Activated CD4-positive, alpha-beta memory T cell treated with anti-CD3 and anti-CD28 coated beads, Interleukin-2, amount 10 ng/mL, durations not matched to agents 7 days and 5 days (primary cell): ENCODE measurements at regions of chr12 and their contacts with region 1.

Region 1: GRCh38 chr12:75526655-75527511 is 15.5 kb upstream of the KRR1 start:
- DNase-seq: peak; percentile 30
- H3K4me3 Mint-ChIP-seq: no peak overlapping the region
- H3K27ac Mint-ChIP-seq: no peak overlapping the region
- H3K4me1 Mint-ChIP-seq: peaks cover 8% of the 10 kb centered on the region
- H3K27me3 Mint-ChIP-seq: peaks cover 22% of the 10 kb centered on the region

Region 2: DNA sequence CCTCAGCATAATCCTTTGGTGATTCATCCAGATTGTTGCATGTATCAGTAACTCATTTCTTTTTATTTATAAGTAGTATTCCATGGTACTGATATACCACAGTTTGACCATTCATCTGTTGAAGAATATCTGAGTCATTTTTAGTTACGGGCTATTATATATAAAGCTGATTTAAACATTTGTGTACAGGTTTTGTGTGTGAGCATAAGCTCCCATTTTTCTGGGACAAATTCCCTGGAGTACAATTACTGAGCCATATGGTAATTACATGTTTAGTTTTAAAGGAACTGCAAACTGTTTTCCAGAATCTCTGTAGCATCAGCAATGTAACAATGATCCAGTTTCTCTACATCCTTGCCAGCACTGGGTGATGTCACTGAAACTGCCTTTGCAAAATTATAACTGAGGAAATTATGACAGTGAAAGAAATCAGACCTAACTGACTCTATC is 220.7 kb after region 1 on chr12:
- CTCF ChIA-PET with region 1: no interaction called
- POLR2A ChIA-PET with region 1: no interaction called
- DNase-seq: no peak
- H3K4me3 Mint-ChIP-seq: no peak overlapping the region
- H3K27ac Mint-ChIP-seq: no peak overlapping the region
- H3K4me1 Mint-ChIP-seq: no peaks in the 10 kb centered on the region
- H3K27me3 Mint-ChIP-seq: peaks cover 24% of the 10 kb centered on the region

Region 3: GRCh38 chr12:75784591-75784990 is 257.7 kb after region 1 on chr12:
- CTCF ChIA-PET with region 1: no interaction called
- POLR2A ChIA-PET with region 1: no interaction called
- DNase-seq: no peak
- H3K4me3 Mint-ChIP-seq: no peak overlapping the region
- H3K27ac Mint-ChIP-seq: no peak overlapping the region
- H3K4me1 Mint-ChIP-seq: peaks cover 11% of the 10 kb centered on the region
- H3K27me3 Mint-ChIP-seq: peaks cover 1% of the 10 kb centered on the region

Region 4: GRCh38 chr12:75814851-75815754 is 288.2 kb after region 1 on chr12:
- CTCF ChIA-PET with region 1: interaction called, 13 read pairs
- POLR2A ChIA-PET with region 1: no interaction called
- DNase-seq: no peak
- H3K4me3 Mint-ChIP-seq: no peak overlapping the region
- H3K27ac Mint-ChIP-seq: no peak overlapping the region
- H3K4me1 Mint-ChIP-seq: peaks cover 24% of the 10 kb centered on the region
- H3K27me3 Mint-ChIP-seq: no peaks in the 10 kb centered on the region

Region 5: DNA sequence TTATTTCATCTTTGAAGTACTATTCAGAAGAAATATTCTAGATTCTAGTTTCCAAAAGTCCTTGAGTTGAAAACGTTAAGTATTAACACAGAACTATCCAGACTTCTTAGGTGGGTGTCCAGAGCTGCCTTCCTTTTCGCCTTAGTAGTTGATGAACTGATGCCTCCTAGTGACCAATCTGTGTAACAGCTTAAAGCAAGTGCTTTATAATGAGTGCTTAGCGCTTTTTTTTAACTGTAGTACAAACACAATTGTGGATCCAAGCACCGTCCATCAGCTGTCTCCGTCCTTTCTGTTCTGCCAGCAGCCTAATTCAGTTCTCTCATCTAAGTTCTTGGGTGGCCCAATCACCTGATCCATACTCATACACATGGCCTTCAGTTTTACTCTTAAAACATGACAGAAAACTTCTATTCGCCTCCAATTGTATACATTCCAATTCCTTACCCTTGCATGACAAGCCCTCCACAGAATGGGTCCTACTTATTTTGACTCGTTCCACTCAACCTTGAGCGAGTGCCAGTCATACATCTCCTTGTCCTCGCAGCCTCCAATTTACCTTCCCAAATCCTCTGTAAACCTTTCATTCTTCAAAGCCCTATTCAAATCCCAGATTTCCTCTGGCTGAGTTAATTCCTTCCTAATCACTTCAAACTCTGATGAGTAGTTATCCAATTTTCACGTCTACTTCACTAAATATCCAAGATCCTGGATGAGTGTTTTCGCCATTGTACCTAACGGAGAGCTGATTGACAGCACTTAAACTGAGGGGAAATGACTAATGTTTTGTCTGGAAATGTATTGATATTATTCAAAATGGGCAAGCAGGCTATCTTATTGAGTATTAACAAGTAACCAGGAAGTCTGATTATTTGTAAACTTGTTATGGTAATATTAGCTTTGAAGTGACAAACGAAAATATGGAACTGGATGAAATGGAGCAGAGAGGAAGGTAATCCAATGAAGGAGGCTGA is 510.5 kb after region 1 on chr12:
- CTCF ChIA-PET with region 1: interaction called, 41 read pairs
- POLR2A ChIA-PET with region 1: interaction called, 24 read pairs
- DNase-seq: peak; percentile 34
- H3K4me3 Mint-ChIP-seq: no peak overlapping the region
- H3K27ac Mint-ChIP-seq: no peak overlapping the region
- H3K4me1 Mint-ChIP-seq: peaks cover 28% of the 10 kb centered on the region
- H3K27me3 Mint-ChIP-seq: no peaks in the 10 kb centered on the region

Region 6: DNA sequence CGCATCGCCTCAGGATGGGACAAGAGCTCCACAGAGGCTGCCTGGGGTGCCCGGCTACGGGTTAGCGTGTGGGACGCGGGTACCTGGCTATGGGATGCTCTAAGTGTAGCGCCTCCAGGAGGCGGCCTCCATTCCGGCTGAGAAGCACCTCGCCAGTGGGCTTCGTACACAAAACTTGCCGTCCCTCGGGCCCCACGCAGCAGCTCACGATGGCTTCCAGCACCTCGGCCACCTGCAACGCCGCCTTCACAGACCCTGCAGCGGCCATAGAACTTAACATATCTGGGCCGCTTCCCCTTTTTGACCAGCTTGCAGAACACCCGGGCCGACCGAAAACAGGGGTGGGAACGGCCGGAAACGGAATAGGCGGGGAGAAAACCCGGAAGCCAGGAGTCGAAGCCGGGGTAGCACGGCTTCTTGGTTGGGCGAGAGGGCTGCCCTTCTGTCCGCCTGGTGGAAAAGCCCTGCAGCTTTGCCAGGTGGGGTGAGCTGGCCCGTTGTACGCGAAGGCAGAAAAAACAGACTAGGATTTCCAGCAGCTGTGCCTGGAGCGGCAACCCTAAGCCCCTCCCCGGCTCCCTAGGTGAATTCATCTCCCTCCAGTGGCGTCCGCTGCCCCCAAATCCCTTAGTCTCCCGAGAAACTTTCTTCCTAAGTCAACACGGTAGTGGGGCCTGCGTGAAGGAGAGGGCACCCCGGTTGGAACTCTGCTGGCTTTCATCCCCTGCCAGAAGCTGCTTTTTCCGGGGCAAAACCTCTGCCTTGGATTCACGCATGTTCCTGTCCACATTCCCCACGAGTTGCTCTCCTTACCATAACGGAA is 821.4 kb after region 1 on chr12 and contains the start of gene BBS10:
- CTCF ChIA-PET with region 1: interaction called, 10 read pairs
- POLR2A ChIA-PET with region 1: no interaction called
- DNase-seq: peak; percentile 89
- H3K4me3 Mint-ChIP-seq: peak within 1 kb of the TSS; percentile 96
- H3K27ac Mint-ChIP-seq: peak within 1 kb of the TSS; percentile 82
- H3K4me1 Mint-ChIP-seq: peaks cover 25% of the 10 kb centered on the region
- H3K27me3 Mint-ChIP-seq: no peaks in the 10 kb centered on the region
- total RNA-seq, gene BBS10: 4.4 to 5.0 TPM